IMR-90 (cell line): ENCODE measurements at regions of chr5 and their contacts with region 1.

Region 1: GRCh38 chr5:41856644-41857491 is 13.4 kb downstream of the OXCT1 start:
- DNase-seq: peak; percentile 73
- ATAC-seq: peak; percentile 96
- H3K4me3 ChIP-seq: no peak overlapping the region
- H3K27ac ChIP-seq: no peak overlapping the region
- H3K4me1 ChIP-seq: no peaks in the 10 kb centered on the region
- H3K27me3 ChIP-seq: no peaks in the 10 kb centered on the region
- CTCF ChIP-seq: peak; percentile 85
- POLR2A ChIP-seq: no peak
- RAD21 ChIP-seq: peak; percentile 88

Region 2: DNA sequence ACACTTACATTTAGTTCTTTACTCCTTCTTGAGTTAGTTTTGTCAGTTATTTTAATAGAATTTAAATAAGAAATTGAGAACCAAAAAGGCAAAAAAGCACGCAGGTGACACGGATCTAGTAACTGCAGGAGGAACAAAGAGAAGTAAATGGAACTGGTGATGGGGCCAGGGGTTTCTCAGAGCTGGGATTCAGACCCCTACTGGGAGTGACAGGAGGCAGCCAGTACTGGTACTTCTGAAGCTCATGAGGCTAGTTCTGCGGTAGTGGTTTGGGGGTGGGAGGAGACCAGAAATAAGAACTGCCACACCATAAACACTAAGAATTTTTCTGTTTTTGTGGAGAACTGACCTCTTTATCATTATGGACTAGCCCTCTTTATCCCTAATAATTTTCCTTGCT is 34.8 kb before region 1 on chr5:
- CTCF ChIA-PET with region 1: no interaction called
- POLR2A ChIA-PET with region 1: no interaction called
- dilution Hi-C with region 1: no loop called
- in situ Hi-C with region 1: no loop called
- intact Hi-C with region 1: no loop called
- DNase-seq: no peak
- ATAC-seq: no peak
- H3K4me3 ChIP-seq: no peak overlapping the region
- H3K27ac ChIP-seq: no peak overlapping the region
- H3K4me1 ChIP-seq: no peaks in the 10 kb centered on the region
- H3K27me3 ChIP-seq: no peaks in the 10 kb centered on the region
- CTCF ChIP-seq: no peak
- POLR2A ChIP-seq: no peak
- RAD21 ChIP-seq: no peak

Region 3: GRCh38 chr5:42005561-42006153 is 148.8 kb after region 1 on chr5:
- CTCF ChIA-PET with region 1: no interaction called
- POLR2A ChIA-PET with region 1: no interaction called
- dilution Hi-C with region 1: no loop called
- in situ Hi-C with region 1: no loop called
- intact Hi-C with region 1: loop called (anchors 1 kb)
- DNase-seq: peak; percentile 24
- ATAC-seq: peak; percentile 64; the same call in 1 of the 2 replicates
- H3K4me3 ChIP-seq: no peak overlapping the region
- H3K27ac ChIP-seq: no peak overlapping the region
- H3K4me1 ChIP-seq: no peaks in the 10 kb centered on the region
- H3K27me3 ChIP-seq: no peaks in the 10 kb centered on the region
- CTCF ChIP-seq: peak; percentile 64
- POLR2A ChIP-seq: no peak
- RAD21 ChIP-seq: no peak

Region 4: DNA sequence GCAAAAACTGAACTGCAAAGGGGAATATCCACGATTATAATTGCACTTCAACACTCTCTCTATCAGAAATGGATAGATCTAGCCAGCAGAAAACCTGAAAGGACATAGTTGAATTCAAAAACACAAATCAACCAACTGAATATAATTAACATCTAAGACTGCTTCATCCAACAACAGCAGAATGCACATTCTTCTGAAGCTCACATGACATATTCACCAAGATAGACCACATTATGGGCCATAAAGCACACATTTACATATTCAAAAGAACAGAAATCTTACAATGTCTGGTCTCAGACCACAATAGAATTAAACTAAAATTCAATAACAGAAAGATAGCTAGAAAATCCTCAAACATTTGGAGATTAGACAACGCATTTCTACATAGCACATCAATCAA is 186.5 kb after region 1 on chr5:
- CTCF ChIA-PET with region 1: no interaction called
- POLR2A ChIA-PET with region 1: no interaction called
- dilution Hi-C with region 1: no loop called
- in situ Hi-C with region 1: loop called (anchors 10 kb)
- intact Hi-C with region 1: no loop called
- DNase-seq: no peak
- ATAC-seq: no peak
- H3K4me3 ChIP-seq: no peak overlapping the region
- H3K27ac ChIP-seq: no peak overlapping the region
- H3K4me1 ChIP-seq: no peaks in the 10 kb centered on the region
- H3K27me3 ChIP-seq: no peaks in the 10 kb centered on the region
- CTCF ChIP-seq: no peak
- POLR2A ChIP-seq: no peak
- RAD21 ChIP-seq: no peak

Region 5: GRCh38 chr5:42057254-42057690 is 200.4 kb after region 1 on chr5:
- CTCF ChIA-PET with region 1: interaction called, 32 read pairs
- POLR2A ChIA-PET with region 1: no interaction called
- dilution Hi-C with region 1: no loop called
- in situ Hi-C with region 1: no loop called
- intact Hi-C with region 1: loop called (anchors 1 kb)
- DNase-seq: peak; percentile 25
- ATAC-seq: peak; percentile 61; the same call in 1 of the 2 replicates
- H3K4me3 ChIP-seq: no peak overlapping the region
- H3K27ac ChIP-seq: no peak overlapping the region
- H3K4me1 ChIP-seq: no peaks in the 10 kb centered on the region
- H3K27me3 ChIP-seq: no peaks in the 10 kb centered on the region
- CTCF ChIP-seq: peak; percentile 61
- POLR2A ChIP-seq: no peak
- RAD21 ChIP-seq: peak; percentile 53; the same call in 1 of the 2 replicates

Region 6: DNA sequence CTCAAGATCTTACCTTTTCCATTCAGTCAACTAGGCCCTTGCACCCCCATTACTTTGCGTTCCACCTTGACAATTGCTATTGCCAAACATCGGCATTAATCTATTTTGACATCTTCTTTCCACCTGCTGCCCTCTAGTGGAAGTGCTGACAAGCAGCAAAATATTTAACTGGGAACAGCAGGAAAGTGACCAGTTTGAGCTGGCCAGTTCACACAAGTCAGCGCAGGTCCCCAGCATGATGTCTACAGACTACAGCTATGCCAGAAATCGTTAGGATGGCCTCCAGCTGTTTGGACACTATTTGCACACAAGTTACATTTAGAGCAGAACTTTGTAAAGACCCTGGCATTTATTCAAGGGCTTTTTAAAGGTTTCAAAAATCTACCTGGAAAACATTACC is 726.5 kb after region 1 on chr5:
- CTCF ChIA-PET with region 1: interaction called, 5 read pairs
- POLR2A ChIA-PET with region 1: no interaction called
- dilution Hi-C with region 1: no loop called
- in situ Hi-C with region 1: loop called (anchors 25 kb)
- intact Hi-C with region 1: loop called (anchors 2 kb)
- DNase-seq: peak; percentile 38
- ATAC-seq: peak; percentile 48; the same call in 1 of the 2 replicates
- H3K4me3 ChIP-seq: no peak overlapping the region
- H3K27ac ChIP-seq: no peak overlapping the region
- H3K4me1 ChIP-seq: no peaks in the 10 kb centered on the region
- H3K27me3 ChIP-seq: no peaks in the 10 kb centered on the region
- CTCF ChIP-seq: peak; percentile 67
- POLR2A ChIP-seq: no peak
- RAD21 ChIP-seq: peak; percentile 49

Region 7: GRCh38 chr5:42767491-42768105 is 910.7 kb after region 1 on chr5:
- CTCF ChIA-PET with region 1: interaction called, 8 read pairs
- POLR2A ChIA-PET with region 1: no interaction called
- dilution Hi-C with region 1: no loop called
- in situ Hi-C with region 1: loop called (anchors 25 kb)
- intact Hi-C with region 1: loop called (anchors 1 kb)
- DNase-seq: peak; percentile 13
- ATAC-seq: peak; percentile 61; the same call in 1 of the 2 replicates
- H3K4me3 ChIP-seq: no peak overlapping the region
- H3K27ac ChIP-seq: no peak overlapping the region
- H3K4me1 ChIP-seq: no peaks in the 10 kb centered on the region
- H3K27me3 ChIP-seq: no peaks in the 10 kb centered on the region
- CTCF ChIP-seq: peak; percentile 53
- POLR2A ChIP-seq: no peak
- RAD21 ChIP-seq: peak; percentile 50